ENCODE measurements at regions of chr22 and their contacts with region 1.

Region 1: GRCh38 chr22:28829358-28830181 is 29.2 kb upstream of the XBP1 start:
- DNase-seq: peak; percentile 82 to 92 (median 90)
- H3K4me3 ChIP-seq: peak overlapping the region in 2 of 7 experiments; percentile 26 to 45
- H3K27ac ChIP-seq: no peak overlapping the region
- H3K4me1 ChIP-seq: peaks cover 2 to 32% (median 17%) of the 10 kb centered on the region in 4 experiments
- H3K27me3 ChIP-seq: no peaks in the 10 kb centered on the region

Region 2: GRCh38 chr22:28600546-28601143 is 228.9 kb before region 1 on chr22:
- CTCF ChIA-PET with region 1: interaction called, 49 read pairs
- POLR2A ChIA-PET with region 1: no interaction called
- DNase-seq: peak; percentile 55 to 83 (median 76)
- H3K4me3 ChIP-seq: no peak overlapping the region
- H3K27ac ChIP-seq: no peak overlapping the region
- H3K4me1 ChIP-seq: peaks cover 0 to 2% (median 0%) of the 10 kb centered on the region in 4 experiments
- H3K27me3 ChIP-seq: no peaks in the 10 kb centered on the region

Region 3: DNA sequence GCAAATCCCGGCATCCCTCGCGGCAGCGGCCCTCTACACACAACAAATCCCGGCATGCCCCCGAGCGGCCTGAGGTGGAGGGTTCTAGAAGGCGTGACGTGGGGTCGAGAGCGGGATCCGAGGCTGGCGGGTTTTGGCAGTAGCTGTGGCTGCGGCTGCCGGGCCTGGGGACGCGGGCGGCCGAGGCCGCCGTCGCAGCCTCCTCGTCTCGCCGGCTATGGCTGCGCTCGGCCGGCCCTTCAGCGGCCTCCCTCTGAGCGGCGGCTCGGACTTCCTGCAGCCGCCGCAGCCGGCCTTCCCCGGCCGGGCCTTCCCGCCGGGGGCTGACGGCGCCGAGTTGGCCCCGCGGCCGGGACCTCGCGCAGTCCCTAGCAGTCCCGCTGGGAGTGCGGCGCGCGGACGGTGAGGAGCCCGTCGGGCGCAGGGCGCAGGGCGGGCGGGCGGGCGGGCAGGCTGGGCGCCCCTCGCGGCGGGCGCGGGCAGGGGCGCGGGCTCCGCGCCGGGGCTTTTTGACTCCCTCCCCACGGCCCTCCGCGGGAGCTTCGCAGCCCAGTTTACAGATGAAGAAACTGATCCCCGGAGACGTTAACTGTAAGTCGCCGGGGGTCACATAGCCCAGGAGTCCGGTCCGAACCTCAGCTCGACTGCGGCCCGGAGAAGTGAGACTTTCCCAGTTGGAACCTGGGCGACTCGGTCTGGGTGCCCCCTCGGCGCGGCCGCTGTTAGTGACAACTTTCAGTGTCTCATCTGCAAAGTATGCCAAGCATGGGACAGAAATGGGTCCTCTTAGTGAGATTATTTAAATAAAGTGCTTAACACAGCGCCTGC is 56.7 kb before region 1 on chr22 and contains the start of gene CCDC117:
- CTCF ChIA-PET with region 1: no interaction called
- POLR2A ChIA-PET with region 1: no interaction called
- DNase-seq: peak; percentile 97 to 98 (median 98)
- H3K4me3 ChIP-seq: peak within 1 kb of the TSS; percentile 85 to 98 (median 90)
- H3K27ac ChIP-seq: peak within 1 kb of the TSS; percentile 79 to 93
- H3K4me1 ChIP-seq: peaks cover 0 to 19% (median 12%) of the 10 kb centered on the region in 4 experiments
- H3K27me3 ChIP-seq: no peaks in the 10 kb centered on the region

Region 4: GRCh38 chr22:28791841-28792490 is 37.6 kb before region 1 on chr22:
- CTCF ChIA-PET with region 1: interaction called, 174 read pairs
- POLR2A ChIA-PET with region 1: interaction called, 7 read pairs
- DNase-seq: peak in 2 of 3 donors; percentile 68 to 82
- H3K4me3 ChIP-seq: no peak overlapping the region
- H3K27ac ChIP-seq: no peak overlapping the region
- H3K4me1 ChIP-seq: peaks cover 14 to 61% (median 50%) of the 10 kb centered on the region in 4 experiments
- H3K27me3 ChIP-seq: no peaks in the 10 kb centered on the region

Region 5: GRCh38 chr22:28800308-28801077 is 29.1 kb before region 1 on chr22 and contains the start of gene XBP1:
- CTCF ChIA-PET with region 1: interaction called, 174 read pairs
- POLR2A ChIA-PET with region 1: interaction called, 18 read pairs
- DNase-seq: peak; percentile 90 to 95 (median 94)
- H3K4me3 ChIP-seq: peak within 1 kb of the TSS; percentile 65 to 100 (median 96)
- H3K27ac ChIP-seq: peak within 1 kb of the TSS; percentile 100
- H3K4me1 ChIP-seq: peaks cover 21 to 75% (median 47%) of the 10 kb centered on the region in 4 experiments
- H3K27me3 ChIP-seq: no peaks in the 10 kb centered on the region

Region 6: DNA sequence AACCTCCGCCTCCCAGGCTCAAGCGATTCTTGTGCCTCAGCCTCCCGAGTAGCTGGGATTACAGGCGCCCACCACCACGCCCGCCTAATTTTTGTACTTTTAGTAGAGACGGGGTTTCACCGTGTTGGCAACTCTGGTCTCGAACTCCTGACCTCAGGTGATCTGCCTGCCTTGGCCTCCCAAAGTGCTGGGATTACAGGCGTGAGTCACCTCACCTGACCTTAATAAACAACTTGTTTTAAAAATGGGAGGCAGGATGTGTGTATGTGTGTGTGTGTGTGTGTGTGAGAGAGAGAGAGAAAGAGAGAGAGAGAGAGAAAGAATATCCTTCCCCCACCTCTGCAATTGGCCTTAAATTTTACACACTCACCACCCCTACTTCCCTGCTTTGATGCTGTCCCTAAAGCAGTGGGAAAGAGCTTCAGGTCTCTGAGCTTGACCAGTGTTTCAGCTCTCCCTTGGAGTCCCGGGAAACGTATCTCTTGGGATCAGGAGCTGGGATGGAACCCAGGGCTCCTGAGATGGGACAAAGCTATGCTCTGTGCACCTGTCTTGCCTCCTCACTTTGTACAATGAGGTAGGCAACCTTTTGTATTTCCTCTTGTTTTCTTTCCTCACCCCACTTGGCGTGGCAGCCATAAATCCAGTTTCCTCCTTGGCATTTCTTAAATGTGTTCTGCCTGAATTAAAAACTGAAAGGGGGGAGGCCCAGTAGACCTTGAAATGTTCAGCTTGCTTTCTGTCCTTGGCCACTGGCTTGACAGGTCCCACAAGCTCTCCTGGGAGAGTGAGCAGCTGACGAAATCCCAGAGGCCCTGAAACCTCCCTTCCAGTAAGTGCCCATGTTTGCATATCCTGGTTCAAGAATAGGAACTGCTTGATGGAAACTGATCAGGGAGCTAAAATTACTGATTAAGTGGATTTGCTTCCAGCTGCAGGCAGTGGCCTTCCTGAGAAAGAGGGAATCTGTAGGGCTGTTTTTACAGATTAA is 11.4 kb before region 1 on chr22:
- CTCF ChIA-PET with region 1: interaction called, 91 read pairs
- POLR2A ChIA-PET with region 1: interaction called, 5 read pairs
- DNase-seq: peak in 1 of 3 donors; percentile 58
- H3K4me3 ChIP-seq: peak overlapping the region in 2 of 7 experiments; percentile 4 to 31
- H3K27ac ChIP-seq: peak overlapping the region; percentile 37 to 59
- H3K4me1 ChIP-seq: peaks cover 24 to 85% (median 80%) of the 10 kb centered on the region in 4 experiments
- H3K27me3 ChIP-seq: no peaks in the 10 kb centered on the region

Region 7: DNA sequence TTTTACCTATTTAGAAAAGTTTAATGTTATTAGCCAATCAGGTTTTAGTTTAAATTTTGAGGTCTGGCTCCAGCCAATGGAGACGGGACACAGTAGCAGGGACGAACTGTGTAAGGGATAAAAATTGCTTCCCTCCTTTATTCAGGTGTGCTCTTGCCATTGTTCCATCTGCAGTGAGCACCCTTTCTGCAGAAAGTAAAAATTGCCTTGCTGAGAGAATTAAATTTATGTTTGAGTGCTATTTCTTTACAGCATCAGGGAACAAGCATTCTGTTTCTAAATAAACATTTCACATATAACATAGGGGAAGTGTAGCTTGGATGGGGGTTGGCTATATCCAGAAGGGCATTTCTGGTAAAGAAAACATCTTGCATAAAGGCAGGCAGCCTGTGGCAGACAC is 17.4 kb after region 1 on chr22:
- CTCF ChIA-PET with region 1: no interaction called
- POLR2A ChIA-PET with region 1: no interaction called
- DNase-seq: no peak
- H3K4me3 ChIP-seq: no peak overlapping the region
- H3K27ac ChIP-seq: no peak overlapping the region
- H3K4me1 ChIP-seq: no peaks in the 10 kb centered on the region
- H3K27me3 ChIP-seq: no peaks in the 10 kb centered on the region